Right ventricle myocardium inferior (tissue), 1 donor: ENCODE measurements at regions of chr6 and their contacts with region 1.

Region 1: DNA sequence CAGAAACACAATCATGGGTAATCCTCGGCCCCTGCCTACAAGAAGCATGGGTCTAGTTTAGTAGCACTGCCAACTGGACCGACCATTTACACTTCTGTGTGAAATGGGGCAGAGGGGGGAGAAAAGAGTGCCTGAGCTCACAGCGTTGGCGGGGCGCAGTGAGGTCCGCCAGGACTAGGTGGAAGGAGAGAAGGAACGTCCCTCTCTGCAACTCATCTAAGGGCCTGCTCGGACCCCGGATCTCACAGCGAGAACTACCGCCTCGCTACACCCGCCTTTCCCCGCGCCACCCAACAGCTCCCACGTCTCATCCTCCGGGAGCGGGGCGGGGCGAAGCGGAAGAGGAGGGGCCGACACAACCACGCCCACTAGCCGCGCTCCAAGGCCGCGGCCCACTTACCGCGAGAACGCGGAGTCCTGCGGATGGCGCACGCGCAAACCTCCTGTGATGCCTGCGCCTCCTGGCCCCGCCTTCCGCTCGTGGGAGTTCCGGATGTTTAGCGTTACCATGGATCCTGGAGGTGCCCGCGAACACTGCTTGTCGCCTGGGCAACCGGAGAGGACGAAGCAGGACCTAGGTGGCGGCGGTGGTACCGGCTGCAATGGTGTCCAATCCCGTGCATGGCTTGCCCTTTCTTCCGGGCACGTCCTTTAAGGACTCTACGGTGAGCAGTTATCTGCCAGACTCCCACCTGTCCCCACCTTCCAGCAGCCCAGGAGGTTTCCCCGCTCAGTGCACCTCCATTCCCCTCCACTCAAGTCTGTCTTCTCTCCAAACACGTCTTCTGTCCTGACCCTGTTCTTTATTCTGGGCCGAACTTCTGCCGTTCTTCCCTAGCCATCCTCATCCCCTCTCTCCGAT is at the start of gene EFHC1:
- DNase-seq: peak; percentile 99
- ATAC-seq: peak; percentile 98
- total RNA-seq, gene EFHC1: 4.8 TPM

Region 2: GRCh38 chr6:52497652-52498408 is 77.8 kb after region 1 on chr6:
- intact Hi-C with region 1: loop called (anchors 1 kb)
- DNase-seq: no peak
- ATAC-seq: no peak

Region 3: DNA sequence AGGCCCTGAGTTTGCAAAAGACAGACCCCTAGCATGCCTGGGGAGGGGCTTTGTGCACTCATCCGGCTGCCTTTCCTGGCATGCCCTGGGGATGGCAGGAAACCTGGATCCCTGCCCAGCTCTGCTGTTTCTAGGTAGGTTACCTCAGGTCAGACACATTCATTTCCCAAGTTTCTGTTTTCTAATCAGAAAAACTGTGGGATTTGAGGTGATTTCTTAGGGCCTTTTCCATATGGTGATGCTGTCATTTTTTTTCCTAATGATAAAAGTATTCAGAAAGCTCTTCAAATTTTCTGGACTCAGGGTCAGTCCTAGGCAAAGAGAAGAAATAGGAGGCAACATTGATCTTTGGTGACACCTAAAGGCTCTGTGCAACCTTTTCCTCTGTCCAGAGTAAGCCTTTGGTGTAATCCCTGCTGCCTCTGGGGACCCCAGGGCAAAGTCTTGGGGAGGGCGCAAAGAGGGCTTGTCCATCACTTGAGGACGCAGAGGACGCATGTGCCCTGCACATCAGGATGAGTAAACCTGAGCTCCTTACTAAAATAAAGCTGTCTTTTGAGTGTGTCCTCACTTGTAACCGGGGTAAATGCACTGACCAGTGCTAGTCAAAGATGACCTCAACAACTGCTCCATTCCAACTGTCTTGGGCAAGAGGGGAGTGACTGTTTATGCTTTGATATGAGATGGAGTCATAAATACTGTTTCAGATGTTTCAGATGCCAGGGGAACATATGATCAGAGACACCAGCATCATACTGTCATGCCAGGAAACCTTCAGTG is 170.3 kb after region 1 on chr6:
- intact Hi-C with region 1: loop called (anchors 1 kb)
- DNase-seq: no peak
- ATAC-seq: peak; percentile 49

Region 4: DNA sequence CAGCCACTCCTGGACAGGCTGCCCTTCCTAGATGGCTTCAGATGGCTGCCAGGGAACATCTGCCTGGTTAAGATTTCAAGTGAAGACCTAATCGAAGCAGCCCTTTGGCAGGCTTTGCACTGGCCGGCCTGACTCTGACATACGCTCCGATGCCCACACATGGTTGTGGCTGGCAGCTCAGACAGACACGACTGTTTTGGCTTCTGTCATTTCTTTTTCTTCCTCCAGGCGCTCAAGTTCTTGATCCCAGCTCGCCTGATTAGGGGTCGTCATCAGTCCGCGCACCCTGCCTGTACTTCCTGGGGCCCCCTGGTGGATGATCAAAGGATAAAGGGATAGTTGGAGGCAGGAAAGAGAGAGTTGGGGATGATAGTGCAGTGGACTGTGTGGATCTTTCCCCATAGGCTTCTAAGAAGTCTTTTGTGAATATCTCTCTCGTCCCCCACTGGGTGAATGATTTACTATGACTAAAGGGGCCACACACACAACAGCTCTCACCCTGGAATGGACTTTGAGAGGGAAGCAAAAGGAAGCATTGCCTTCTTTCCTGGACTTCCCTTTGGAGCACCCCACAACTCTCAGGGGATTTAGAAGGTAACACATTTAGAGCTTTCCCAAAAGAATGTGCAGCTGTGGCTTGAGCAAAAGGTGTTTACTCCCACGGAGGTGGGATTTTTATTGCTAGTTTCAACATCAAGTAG is 178.2 kb after region 1 on chr6:
- intact Hi-C with region 1: loop called (anchors 2 kb)
- DNase-seq: peak; percentile 79
- ATAC-seq: peak; percentile 70